ENCODE measurements at regions of chr11 and their contacts with region 1.

Region 1: GRCh38 chr11:64317957-64318693 is at the start of gene PRDX5:
- DNase-seq: peak; percentile 92 to 99
- H3K4me3 ChIP-seq: peak within 1 kb of the TSS; percentile 69
- H3K27ac ChIP-seq: peak within 1 kb of the TSS; percentile 87
- H3K4me1 ChIP-seq: peaks cover 47% of the 10 kb centered on the region
- H3K27me3 ChIP-seq: no peaks in the 10 kb centered on the region
- CTCF ChIP-seq: peak; percentile 39; the same call in 1 of the 2 replicates
- total RNA-seq, gene PRDX5: 381 and 441 TPM in 2 replicates

Region 2: GRCh38 chr11:64240394-64241174 is 77.5 kb before region 1 on chr11 and contains the start of gene FKBP2:
- CTCF ChIA-PET with region 1: interaction called, 7 read pairs
- POLR2A ChIA-PET with region 1: interaction called, 7 read pairs
- intact Hi-C with region 1: loop called (anchors 2 kb)
- DNase-seq: peak; percentile 97 to 98
- H3K4me3 ChIP-seq: peak within 1 kb of the TSS; percentile 90
- H3K27ac ChIP-seq: peak within 1 kb of the TSS; percentile 97
- H3K4me1 ChIP-seq: peaks cover 46% of the 10 kb centered on the region
- H3K27me3 ChIP-seq: no peaks in the 10 kb centered on the region
- CTCF ChIP-seq: no peak
- total RNA-seq, gene FKBP2: 84.2 and 93.2 TPM in 2 replicates

Region 3: DNA sequence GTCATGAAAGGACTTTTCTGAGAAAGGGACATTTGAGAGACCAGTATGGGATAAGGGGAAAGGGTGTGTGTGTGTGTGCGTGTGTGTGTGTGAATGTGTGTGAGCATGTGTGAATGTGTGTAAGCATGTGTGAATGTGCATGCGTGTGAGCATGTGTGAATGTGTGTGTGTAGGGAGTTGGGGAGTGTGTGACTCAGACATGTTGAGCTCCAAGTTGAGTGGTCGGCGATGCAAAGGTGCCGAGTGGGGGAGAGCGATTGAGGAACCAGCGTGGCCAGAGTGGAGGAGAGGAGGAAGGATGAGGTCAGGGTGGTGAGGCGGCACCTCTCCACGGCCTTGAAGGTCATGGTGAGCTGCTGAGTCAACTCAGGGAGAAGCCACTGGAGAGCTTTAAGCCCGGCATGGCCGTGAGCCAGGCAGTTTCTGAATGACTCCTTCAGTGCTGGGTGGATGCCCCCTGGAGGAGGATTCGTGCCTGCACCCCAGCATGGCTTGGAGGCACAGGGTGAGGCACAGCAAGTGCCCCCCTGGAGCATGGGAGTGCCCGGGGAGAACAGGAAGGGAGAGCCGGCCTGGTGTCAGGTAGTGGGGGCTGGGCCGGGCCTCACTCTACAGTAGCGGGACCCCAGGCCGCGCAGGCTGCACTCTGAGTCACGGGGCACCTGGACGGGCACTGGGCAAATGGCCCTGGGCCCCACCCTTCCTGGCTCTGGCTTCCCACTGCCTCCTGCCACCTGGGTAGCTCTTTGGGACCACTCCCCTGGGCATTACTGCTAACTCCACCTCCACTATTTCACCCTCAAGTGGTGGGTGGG is 13.6 kb after region 1 on chr11:
- CTCF ChIA-PET with region 1: interaction called, 55 read pairs
- POLR2A ChIA-PET with region 1: interaction called, 23 read pairs
- intact Hi-C with region 1: loop called (anchors 1 kb)
- DNase-seq: peak; percentile 97 to 99
- H3K4me3 ChIP-seq: no peak overlapping the region; the same call in 1 of the 2 replicates
- H3K27ac ChIP-seq: peak overlapping the region; percentile 83
- H3K4me1 ChIP-seq: peaks cover 51% of the 10 kb centered on the region
- H3K27me3 ChIP-seq: no peaks in the 10 kb centered on the region
- CTCF ChIP-seq: peak; percentile 88

Region 4: DNA sequence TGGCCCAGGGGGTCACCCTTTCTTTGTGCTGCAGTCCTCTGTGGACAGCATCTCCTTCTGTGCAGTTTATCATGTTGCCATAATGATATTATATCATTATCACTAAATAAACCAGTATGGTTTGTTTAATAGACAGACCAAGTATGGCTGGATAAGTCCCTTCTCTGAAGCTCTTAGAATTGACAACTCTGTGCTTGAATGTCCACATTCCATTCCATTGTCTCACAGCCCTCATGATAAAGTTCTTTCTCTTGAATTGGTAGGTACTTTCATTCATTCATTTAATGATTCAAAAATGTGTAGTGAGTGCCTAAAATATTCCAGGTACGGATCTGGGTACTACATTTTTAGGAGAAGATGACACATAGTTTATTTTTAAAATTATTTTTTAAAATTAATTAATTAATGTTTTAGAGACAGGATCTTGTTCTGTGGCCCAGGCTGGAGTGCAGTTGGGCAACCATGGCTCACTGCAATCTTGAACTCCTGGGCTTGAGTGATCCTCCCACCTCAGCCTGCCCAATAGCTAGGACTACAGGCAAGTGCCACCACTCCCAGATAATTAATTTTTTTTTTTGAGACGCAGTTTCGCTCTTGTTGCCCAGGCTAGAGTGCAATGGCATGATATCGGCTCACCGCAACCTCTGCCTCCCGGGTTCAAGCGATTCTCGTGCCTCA is 48.8 kb after region 1 on chr11:
- CTCF ChIA-PET with region 1: no interaction called
- POLR2A ChIA-PET with region 1: no interaction called
- intact Hi-C with region 1: no loop called
- DNase-seq: peak in 1 of 2 experiments; percentile 81
- H3K4me3 ChIP-seq: no peak overlapping the region
- H3K27ac ChIP-seq: 0 out of 2 replicates have a peak overlapping the region, but pooled peaks have one; percentile 10
- H3K4me1 ChIP-seq: peaks cover 13% of the 10 kb centered on the region
- H3K27me3 ChIP-seq: no peaks in the 10 kb centered on the region
- CTCF ChIP-seq: no peak

Region 5: DNA sequence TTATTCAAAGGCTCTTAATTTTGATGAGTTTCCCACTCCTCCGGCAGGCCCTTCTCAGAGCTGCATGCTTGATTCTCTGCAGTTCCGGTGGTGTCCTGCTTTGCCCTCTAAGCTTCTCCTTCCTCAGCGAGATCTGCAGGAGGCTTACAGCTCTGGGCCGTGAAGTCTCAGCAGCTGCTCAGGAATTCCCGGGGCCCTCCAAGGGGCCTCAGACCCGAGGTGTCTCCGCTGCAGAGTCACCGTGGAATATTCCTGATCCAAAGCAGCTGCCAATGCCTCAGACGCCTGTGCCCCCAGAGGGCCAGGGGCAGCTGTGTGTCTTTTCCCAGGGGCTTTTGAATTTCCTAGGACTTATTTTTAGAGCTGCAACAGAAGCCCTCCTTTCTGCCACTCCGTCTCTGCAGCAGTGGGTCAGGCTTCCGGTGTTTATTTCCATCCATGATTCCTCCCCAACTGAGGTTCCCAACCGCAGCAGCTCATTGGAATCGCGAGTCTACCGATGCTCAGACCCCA is 78.0 kb after region 1 on chr11:
- CTCF ChIA-PET with region 1: no interaction called
- POLR2A ChIA-PET with region 1: no interaction called
- intact Hi-C with region 1: no loop called
- DNase-seq: no peak
- H3K4me3 ChIP-seq: no peak overlapping the region
- H3K27ac ChIP-seq: no peak overlapping the region
- H3K4me1 ChIP-seq: peaks cover 18% of the 10 kb centered on the region
- H3K27me3 ChIP-seq: no peaks in the 10 kb centered on the region
- CTCF ChIP-seq: no peak

Region 6: DNA sequence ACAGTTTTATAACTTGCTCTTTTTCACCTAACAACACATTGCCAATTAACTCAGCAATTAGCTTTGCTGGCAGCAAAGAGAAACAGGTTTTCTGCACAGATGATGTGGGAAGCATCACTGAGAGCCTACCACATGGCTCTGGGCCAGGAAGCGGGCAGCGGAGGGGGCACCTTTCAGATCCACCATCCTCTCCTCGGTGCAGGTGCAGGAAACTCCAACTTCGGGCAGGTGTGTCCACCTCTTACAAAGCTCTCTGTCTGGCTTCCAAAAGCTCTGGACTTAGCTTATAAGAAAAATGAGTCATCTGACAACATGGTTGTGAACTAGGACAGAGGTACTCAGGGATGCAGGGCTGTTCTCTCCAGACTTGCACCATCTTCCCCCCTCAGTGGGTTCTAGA is 117.9 kb after region 1 on chr11:
- CTCF ChIA-PET with region 1: no interaction called
- POLR2A ChIA-PET with region 1: no interaction called
- intact Hi-C with region 1: no loop called
- DNase-seq: peak; percentile 62 to 92
- H3K4me3 ChIP-seq: no peak overlapping the region
- H3K27ac ChIP-seq: peak overlapping the region; percentile 44
- H3K4me1 ChIP-seq: peaks cover 58% of the 10 kb centered on the region
- H3K27me3 ChIP-seq: no peaks in the 10 kb centered on the region
- CTCF ChIP-seq: no peak

Region 7: GRCh38 chr11:64448599-64449556 is 130.8 kb after region 1 on chr11:
- CTCF ChIA-PET with region 1: interaction called, 10 read pairs
- POLR2A ChIA-PET with region 1: no interaction called
- intact Hi-C with region 1: loop called (anchors 1 kb)
- DNase-seq: peak; percentile 60 to 89
- H3K4me3 ChIP-seq: peak overlapping the region; percentile 40; the same call in 1 of the 2 replicates
- H3K27ac ChIP-seq: no peak overlapping the region
- H3K4me1 ChIP-seq: peaks cover 16% of the 10 kb centered on the region
- H3K27me3 ChIP-seq: peaks cover 30% of the 10 kb centered on the region
- CTCF ChIP-seq: peak; percentile 92

Region 8: DNA sequence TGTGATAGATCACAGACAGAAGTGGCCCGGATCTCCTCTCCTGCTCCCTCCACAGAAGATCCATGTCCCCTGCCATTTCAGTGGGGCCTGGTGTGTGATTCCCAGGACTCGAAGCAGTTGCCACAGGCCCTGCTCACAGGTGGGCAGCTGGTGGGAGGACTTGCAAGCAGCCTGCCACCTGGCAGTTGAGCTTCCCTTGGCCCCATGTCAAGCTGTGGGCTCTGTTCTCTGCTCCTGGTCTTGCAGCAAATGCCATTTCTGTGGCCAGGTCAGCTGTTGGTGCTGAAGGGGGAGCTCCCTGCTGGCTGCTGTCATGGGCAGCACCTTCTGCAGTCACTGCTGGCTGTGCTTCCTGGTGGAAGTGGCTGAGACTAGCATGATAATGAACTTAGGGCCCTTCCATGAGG is 213.8 kb after region 1 on chr11:
- CTCF ChIA-PET with region 1: no interaction called
- POLR2A ChIA-PET with region 1: no interaction called
- intact Hi-C with region 1: no loop called
- DNase-seq: no peak
- H3K4me3 ChIP-seq: no peak overlapping the region
- H3K27ac ChIP-seq: no peak overlapping the region
- H3K4me1 ChIP-seq: peaks cover 6% of the 10 kb centered on the region; the same call in 1 of the 2 replicates
- H3K27me3 ChIP-seq: peaks cover 88% of the 10 kb centered on the region
- CTCF ChIP-seq: no peak

Region 9: DNA sequence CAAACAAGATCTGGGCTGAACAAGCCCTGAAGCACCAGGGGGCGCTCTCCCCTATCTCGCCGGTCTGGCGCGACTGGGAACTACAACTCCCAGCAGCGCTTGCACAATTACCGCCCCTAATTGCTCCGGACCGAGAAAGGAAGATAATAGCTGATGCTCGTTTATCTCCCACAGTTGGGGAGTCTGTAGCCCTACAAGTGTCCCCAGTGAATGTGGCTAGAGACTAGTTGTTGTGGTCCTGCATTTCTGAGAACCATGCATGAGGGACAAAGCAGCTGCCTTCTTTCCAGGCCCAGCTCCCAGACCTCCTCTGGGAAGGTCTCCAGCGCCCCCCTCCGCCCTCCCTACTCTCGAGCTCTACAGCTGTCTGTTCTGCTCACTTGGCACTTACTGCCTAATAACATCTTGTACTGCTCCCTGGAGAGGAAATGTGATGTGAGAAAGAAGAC is 370.4 kb after region 1 on chr11:
- CTCF ChIA-PET with region 1: interaction called, 16 read pairs
- POLR2A ChIA-PET with region 1: no interaction called
- intact Hi-C with region 1: no loop called
- DNase-seq: peak; percentile 60 to 89
- H3K4me3 ChIP-seq: peak overlapping the region; percentile 45; the same call in 1 of the 2 replicates
- H3K27ac ChIP-seq: no peak overlapping the region
- H3K4me1 ChIP-seq: no peaks in the 10 kb centered on the region
- H3K27me3 ChIP-seq: peaks cover 54% of the 10 kb centered on the region
- CTCF ChIP-seq: peak; percentile 94